PC-3 (cell line): ENCODE measurements at regions of chr5 and their contacts with region 1.

Region 1: DNA sequence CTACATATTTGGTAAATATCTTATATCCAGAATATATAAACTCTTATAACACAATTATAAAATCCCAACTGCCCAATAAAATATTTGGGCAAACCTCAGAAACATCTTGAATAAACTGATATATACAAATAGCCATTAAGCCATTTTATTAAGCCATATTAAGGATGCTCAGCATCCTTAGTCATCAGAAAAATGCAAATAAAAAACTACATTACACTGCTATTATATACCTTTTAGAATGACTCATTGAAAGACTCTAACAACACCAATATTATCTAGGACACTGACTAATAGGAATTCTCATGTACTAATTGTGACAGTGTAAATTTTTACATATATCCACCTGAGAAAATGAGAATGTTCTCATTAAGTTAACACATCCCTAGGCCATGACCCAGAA is 77.8 kb downstream of the CDH10 start:
- DNase-seq: peak; percentile 76
- ATAC-seq: peak; percentile 97
- H3K4me3 ChIP-seq: no peak overlapping the region
- H3K27ac ChIP-seq: peak overlapping the region; percentile 59
- H3K4me1 ChIP-seq: peaks cover 8% of the 10 kb centered on the region
- H3K27me3 ChIP-seq: no peaks in the 10 kb centered on the region
- CTCF ChIP-seq: no peak

Region 2: DNA sequence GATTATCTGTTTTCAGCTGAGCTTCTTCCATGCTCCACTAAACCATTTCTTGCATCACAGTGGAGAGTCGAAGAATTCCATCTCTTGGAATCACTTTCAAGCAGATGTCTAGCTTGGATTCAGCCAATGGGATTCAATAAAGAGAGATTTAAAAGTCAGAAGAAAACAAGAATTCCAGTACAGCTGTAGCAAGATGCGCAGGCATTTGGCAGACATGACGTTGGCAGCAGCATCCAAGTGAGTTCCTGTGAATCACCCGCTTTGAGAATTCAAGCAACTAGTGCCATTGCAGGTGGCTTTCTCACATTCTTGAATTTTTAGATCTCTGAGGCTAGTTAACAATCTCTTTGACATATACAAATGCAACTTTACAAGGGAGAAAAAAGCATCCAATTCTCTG is 389.1 kb before region 1 on chr5:
- CTCF ChIA-PET with region 1: no interaction called
- POLR2A ChIA-PET with region 1: no interaction called
- intact Hi-C with region 1: loop called (anchors 5 kb)
- DNase-seq: no peak
- ATAC-seq: no peak
- H3K4me3 ChIP-seq: no peak overlapping the region
- H3K27ac ChIP-seq: no peak overlapping the region
- H3K4me1 ChIP-seq: no peaks in the 10 kb centered on the region
- H3K27me3 ChIP-seq: no peaks in the 10 kb centered on the region
- CTCF ChIP-seq: no peak

Region 3: DNA sequence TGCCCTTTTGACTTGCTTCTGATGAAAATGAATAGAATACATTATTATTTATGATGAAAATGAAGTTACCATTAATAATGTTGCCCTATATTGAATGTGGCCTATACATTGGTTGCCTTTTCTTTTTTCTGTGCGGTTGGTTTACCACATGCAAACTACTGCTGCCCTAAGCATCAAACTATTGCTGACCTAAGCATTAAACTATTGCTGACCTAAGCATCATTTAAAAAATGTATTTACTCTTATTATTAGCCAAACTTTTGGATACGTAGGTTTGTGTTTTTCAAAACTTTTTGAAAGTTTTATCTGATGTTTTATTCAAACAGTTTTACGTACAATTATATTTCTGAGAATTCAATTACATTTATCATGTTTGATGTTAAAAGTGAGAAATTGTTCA is 153.8 kb after region 1 on chr5:
- CTCF ChIA-PET with region 1: no interaction called
- POLR2A ChIA-PET with region 1: no interaction called
- intact Hi-C with region 1: no loop called
- DNase-seq: no peak
- ATAC-seq: no peak
- H3K4me3 ChIP-seq: no peak overlapping the region
- H3K27ac ChIP-seq: no peak overlapping the region
- H3K4me1 ChIP-seq: no peaks in the 10 kb centered on the region
- H3K27me3 ChIP-seq: no peaks in the 10 kb centered on the region
- CTCF ChIP-seq: no peak